Activated CD4-positive, alpha-beta memory T cell treated with anti-CD3 and anti-CD28 coated beads for 36 hours (primary cell): ENCODE measurements at regions of chr9 and their contacts with region 1.

Region 1: GRCh38 chr9:136488247-136489214 is 5.7 kb upstream of the SEC16A start:
- DNase-seq: peak; percentile 83
- H3K4me3 Mint-ChIP-seq: no peak overlapping the region
- H3K27ac Mint-ChIP-seq: no peak overlapping the region
- H3K4me1 Mint-ChIP-seq: peaks cover 3% of the 10 kb centered on the region
- H3K27me3 Mint-ChIP-seq: no peaks in the 10 kb centered on the region

Region 2: GRCh38 chr9:136316896-136317676 is 171.4 kb before region 1 on chr9:
- CTCF ChIA-PET with region 1: no interaction called
- POLR2A ChIA-PET with region 1: no interaction called
- intact Hi-C with region 1: no loop called
- DNase-seq: no peak
- H3K4me3 Mint-ChIP-seq: no peak overlapping the region
- H3K27ac Mint-ChIP-seq: no peak overlapping the region
- H3K4me1 Mint-ChIP-seq: no peaks in the 10 kb centered on the region
- H3K27me3 Mint-ChIP-seq: no peaks in the 10 kb centered on the region

Region 3: DNA sequence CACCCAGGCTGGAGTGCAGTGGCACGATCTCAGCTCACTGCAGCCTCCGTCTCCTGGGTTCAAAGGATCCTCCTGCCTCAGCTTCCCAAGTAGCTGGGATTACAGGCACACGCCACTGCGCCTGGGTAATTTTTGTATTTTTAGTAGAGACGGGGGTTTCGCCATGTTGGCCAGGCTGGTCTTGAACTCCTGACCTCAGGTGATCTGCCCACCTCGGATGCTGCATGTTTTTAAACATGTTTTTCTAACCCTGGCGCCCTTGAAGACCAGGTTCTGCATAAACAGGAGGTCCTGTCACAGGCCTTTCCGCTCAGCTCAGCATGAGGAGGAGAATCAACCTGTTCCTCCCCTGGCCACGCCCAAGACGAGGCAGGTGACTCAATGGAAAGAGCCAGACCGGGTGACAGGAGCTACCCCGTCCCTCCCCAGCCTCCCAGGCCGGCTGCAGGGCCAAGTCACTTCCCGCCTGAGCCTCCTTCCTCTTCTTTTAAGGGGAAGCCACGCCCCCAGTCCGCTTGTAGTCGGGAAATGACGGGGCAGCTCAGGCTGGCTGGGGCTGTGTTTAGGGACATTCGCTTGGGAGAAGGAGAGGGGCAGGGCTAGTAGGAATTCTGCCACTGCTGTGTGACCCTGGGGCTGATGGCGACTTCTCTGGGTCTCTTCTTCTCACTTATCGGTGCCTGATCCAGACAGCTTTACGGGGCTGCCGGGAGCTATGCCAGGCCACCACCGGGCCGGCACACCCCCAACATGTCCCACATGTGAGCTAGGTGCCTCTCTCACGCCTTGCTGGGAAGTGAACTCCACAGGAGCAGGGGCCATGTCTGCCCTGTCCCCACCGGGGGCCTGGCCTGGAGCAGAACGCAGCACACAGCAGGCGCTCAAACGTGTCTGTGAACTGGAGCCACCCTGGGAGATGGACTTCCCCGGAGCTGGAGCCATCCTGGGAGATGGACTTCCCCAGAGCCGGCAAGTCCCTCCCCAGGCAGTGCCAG is 51.2 kb after region 1 on chr9:
- CTCF ChIA-PET with region 1: interaction called, 24 read pairs
- POLR2A ChIA-PET with region 1: interaction called, 7 read pairs
- intact Hi-C with region 1: loop called (anchors 1 kb)
- DNase-seq: peak; percentile 99
- H3K4me3 Mint-ChIP-seq: peak overlapping the region; percentile 78
- H3K27ac Mint-ChIP-seq: peak overlapping the region; percentile 99
- H3K4me1 Mint-ChIP-seq: peaks cover 73% of the 10 kb centered on the region
- H3K27me3 Mint-ChIP-seq: no peaks in the 10 kb centered on the region

Region 4: DNA sequence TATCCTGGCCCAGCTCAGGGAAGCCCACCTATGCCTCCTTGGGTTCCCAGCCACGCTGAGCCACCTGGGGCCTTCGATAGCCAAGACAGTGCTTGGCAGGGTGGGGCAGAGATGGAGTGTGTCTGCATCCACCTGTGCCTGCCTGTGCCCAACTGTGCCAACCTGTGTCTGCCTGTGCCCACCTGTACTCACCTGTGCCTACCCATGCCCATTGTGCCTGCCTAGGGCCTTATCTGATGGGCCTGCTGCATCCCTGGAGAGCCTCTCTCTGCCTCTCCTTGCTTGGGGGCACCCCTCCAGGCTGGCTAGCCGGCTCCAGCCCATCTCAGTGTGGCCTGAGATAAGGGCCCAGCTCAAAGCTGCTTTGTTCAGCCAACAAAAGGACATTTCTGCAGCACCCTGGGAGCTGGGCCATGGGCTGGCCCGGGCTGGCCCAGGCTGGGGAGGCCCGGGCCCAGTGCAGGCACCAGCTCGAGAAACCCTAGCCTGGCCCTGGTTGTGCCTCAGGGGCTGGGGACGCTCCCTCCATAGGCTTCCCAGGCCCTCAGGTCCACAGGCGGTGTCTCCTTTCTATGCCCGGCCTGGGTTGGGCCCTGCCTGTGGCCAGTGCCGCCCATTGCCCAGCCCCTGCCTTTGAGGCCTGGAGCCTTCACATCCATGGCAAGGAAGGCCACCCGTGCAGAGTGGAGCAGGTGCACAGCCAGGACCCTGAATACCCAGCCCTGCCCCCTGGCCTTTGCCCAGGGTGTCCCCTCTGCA is 94.6 kb after region 1 on chr9:
- CTCF ChIA-PET with region 1: no interaction called
- POLR2A ChIA-PET with region 1: no interaction called
- intact Hi-C with region 1: no loop called
- DNase-seq: no peak
- H3K4me3 Mint-ChIP-seq: no peak overlapping the region
- H3K27ac Mint-ChIP-seq: no peak overlapping the region
- H3K4me1 Mint-ChIP-seq: peaks cover 6% of the 10 kb centered on the region
- H3K27me3 Mint-ChIP-seq: no peaks in the 10 kb centered on the region

Region 5: GRCh38 chr9:136631038-136632000 is 142.8 kb after region 1 on chr9:
- CTCF ChIA-PET with region 1: interaction called, 106 read pairs
- POLR2A ChIA-PET with region 1: no interaction called
- intact Hi-C with region 1: loop called (anchors 1 kb)
- DNase-seq: peak; percentile 84
- H3K4me3 Mint-ChIP-seq: no peak overlapping the region
- H3K27ac Mint-ChIP-seq: no peak overlapping the region
- H3K4me1 Mint-ChIP-seq: no peaks in the 10 kb centered on the region
- H3K27me3 Mint-ChIP-seq: peaks cover 5% of the 10 kb centered on the region